ENCODE measurements at regions of chr2 and their contacts with region 1.

Region 1: GRCh38 chr2:171687287-171688128 is at the start of gene DYNC1I2:
- DNase-seq: peak; percentile 33 to 89 (median 69)
- ATAC-seq: peak; percentile 76
- H3K4me3 ChIP-seq: peak within 1 kb of the TSS; percentile 89 to 93
- H3K4me3 Mint-ChIP-seq: peak within 1 kb of the TSS; percentile 94
- H3K27ac ChIP-seq: peak within 1 kb of the TSS; percentile 45 to 52
- H3K27ac Mint-ChIP-seq: peak within 1 kb of the TSS; percentile 91
- H3K4me1 ChIP-seq: peaks cover 11% of the 10 kb centered on the region
- H3K4me1 Mint-ChIP-seq: peaks cover 25% of the 10 kb centered on the region
- H3K27me3 ChIP-seq: no peaks in the 10 kb centered on the region
- H3K27me3 Mint-ChIP-seq: no peaks in the 10 kb centered on the region
- CTCF ChIP-seq: no peak
- total RNA-seq, gene DYNC1I2: 6.9 to 9.1 TPM

Region 2: GRCh38 chr2:169798718-169799592 is 1888.6 kb before region 1 on chr2 and contains the start of gene SSB:
- CTCF ChIA-PET with region 1: no interaction called
- POLR2A ChIA-PET with region 1: no interaction called
- intact Hi-C with region 1: loop called in 1 of 2 experiments (anchors 5 kb)
- DNase-seq: peak; percentile 83 to 97 (median 93)
- ATAC-seq: peak; percentile 92
- H3K4me3 ChIP-seq: peak within 1 kb of the TSS; percentile 55 to 80
- H3K4me3 Mint-ChIP-seq: peak within 1 kb of the TSS; percentile 80
- H3K27ac ChIP-seq: peak within 1 kb of the TSS; percentile 86 to 89
- H3K27ac Mint-ChIP-seq: peak within 1 kb of the TSS; percentile 87
- H3K4me1 ChIP-seq: peaks cover 20% of the 10 kb centered on the region
- H3K4me1 Mint-ChIP-seq: peaks cover 29% of the 10 kb centered on the region
- H3K27me3 ChIP-seq: no peaks in the 10 kb centered on the region
- H3K27me3 Mint-ChIP-seq: no peaks in the 10 kb centered on the region
- CTCF ChIP-seq: no peak
- total RNA-seq, gene SSB: 150 to 170 TPM

Region 3: GRCh38 chr2:171741189-171741588 is 53.7 kb after region 1 on chr2:
- CTCF ChIA-PET with region 1: no interaction called
- POLR2A ChIA-PET with region 1: no interaction called
- intact Hi-C with region 1: no loop called
- DNase-seq: no peak
- ATAC-seq: no peak
- H3K4me3 ChIP-seq: no peak overlapping the region
- H3K4me3 Mint-ChIP-seq: no peak overlapping the region
- H3K27ac ChIP-seq: no peak overlapping the region
- H3K27ac Mint-ChIP-seq: no peak overlapping the region
- H3K4me1 ChIP-seq: no peaks in the 10 kb centered on the region
- H3K4me1 Mint-ChIP-seq: peaks cover 8% of the 10 kb centered on the region
- H3K27me3 ChIP-seq: no peaks in the 10 kb centered on the region
- H3K27me3 Mint-ChIP-seq: no peaks in the 10 kb centered on the region
- CTCF ChIP-seq: no peak

Region 4: DNA sequence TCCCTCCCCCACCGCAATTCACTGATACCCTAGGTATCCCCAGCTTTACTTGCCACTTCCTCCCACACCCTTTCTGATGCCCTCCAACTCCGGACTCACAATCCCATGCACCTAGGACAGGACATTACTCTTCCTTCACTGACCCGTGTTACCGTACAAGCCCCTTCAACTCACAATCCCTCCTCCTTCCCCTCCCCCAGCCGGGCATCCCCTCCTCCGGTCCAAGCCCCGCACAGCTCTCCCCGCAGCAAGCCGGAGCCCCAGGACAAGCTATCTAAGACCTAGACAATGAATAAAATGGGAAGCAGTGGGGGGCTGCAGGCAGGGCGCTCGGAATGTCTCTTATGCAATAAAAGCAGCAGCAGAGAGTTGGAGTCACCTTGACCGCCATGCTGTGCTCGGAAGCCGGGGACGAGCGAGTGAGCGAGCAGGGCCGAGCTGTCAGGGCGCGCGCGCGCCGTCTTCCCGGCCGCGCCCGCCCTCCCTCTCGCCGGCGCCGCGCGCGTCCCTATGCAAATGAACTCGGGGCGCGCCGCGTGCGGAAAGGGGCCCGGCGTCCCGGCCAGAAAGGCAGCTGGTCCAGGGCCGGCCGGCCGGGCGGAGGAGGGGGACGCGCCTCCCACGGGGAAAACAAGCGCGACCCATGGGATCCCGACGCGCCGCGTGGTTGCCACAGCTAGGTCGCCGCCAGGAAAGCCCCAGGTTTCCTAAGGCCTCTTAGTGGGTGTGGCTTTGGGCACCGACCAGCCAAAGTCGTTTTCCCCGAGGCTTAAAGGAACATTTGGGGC is 206.5 kb after region 1 on chr2 and contains the start of gene SLC25A12:
- CTCF ChIA-PET with region 1: no interaction called
- POLR2A ChIA-PET with region 1: no interaction called
- intact Hi-C with region 1: loop called in 1 of 2 experiments (anchors 1 kb)
- DNase-seq: peak; percentile 38 to 87 (median 72)
- ATAC-seq: peak; percentile 93
- H3K4me3 ChIP-seq: peak within 1 kb of the TSS; percentile 76 to 97
- H3K4me3 Mint-ChIP-seq: peak within 1 kb of the TSS; percentile 99
- H3K27ac ChIP-seq: peak within 1 kb of the TSS; percentile 51 to 71
- H3K27ac Mint-ChIP-seq: peak within 1 kb of the TSS; percentile 88
- H3K4me1 ChIP-seq: peaks cover 25% of the 10 kb centered on the region
- H3K4me1 Mint-ChIP-seq: peaks cover 47% of the 10 kb centered on the region
- H3K27me3 ChIP-seq: no peaks in the 10 kb centered on the region
- H3K27me3 Mint-ChIP-seq: no peaks in the 10 kb centered on the region
- CTCF ChIP-seq: no peak
- total RNA-seq, gene SLC25A12: 9.1 to 9.2 TPM

Region 5: DNA sequence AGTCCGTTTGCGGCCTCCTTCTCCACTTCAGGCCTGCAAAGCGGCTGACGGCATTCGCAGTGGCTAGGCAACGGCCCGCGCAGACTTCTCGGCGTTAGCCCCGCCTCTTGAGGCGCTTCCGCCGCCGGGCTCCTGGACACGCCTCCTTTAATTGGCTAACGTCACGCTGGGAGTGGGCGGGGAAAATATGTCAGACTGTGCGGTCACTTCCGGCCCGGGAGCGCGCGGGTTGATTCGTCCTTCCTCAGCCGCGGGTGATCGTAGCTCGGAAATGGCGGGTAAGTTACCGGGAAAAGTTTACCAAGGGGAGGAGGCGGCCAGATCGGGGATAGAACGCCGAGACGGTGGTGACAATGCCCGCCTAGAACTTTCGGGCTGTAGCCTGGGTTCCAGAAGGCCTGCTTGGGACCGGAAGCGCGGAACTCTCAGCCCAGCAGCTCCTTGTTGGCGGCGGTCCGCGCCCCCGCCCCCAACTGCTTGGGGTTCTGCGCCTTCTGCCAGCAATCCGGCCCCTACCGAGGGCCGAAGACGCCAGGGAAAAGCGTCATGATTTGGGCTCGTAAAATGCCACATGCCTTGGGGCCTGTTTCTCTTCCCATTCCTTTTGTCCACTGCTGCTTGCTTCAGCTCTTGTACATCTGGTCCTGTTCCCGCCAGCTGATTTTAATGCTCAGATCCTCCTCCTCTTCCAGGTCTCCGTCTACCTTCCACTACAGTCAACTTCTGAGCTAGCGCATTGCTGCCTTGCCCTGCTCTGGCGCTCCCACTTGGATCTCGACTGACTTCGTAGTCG is 234.9 kb after region 1 on chr2 and contains the start of gene HAT1:
- CTCF ChIA-PET with region 1: no interaction called
- POLR2A ChIA-PET with region 1: no interaction called
- intact Hi-C with region 1: loop called (anchors 1 to 5 kb)
- DNase-seq: peak; percentile 94 to 99 (median 97)
- ATAC-seq: peak; percentile 98
- H3K4me3 ChIP-seq: peak within 1 kb of the TSS; percentile 82 to 97
- H3K4me3 Mint-ChIP-seq: peak within 1 kb of the TSS; percentile 98
- H3K27ac ChIP-seq: peak within 1 kb of the TSS; percentile 94 to 96
- H3K27ac Mint-ChIP-seq: peak within 1 kb of the TSS; percentile 97
- H3K4me1 ChIP-seq: peaks cover 21% of the 10 kb centered on the region
- H3K4me1 Mint-ChIP-seq: peaks cover 45% of the 10 kb centered on the region
- H3K27me3 ChIP-seq: no peaks in the 10 kb centered on the region
- H3K27me3 Mint-ChIP-seq: no peaks in the 10 kb centered on the region
- CTCF ChIP-seq: no peak
- total RNA-seq, gene HAT1: 29.5 to 30.2 TPM

Region 6: GRCh38 chr2:171999604-172000469 is 312.3 kb after region 1 on chr2 and contains the start of gene METAP1D:
- CTCF ChIA-PET with region 1: no interaction called
- POLR2A ChIA-PET with region 1: no interaction called
- intact Hi-C with region 1: loop called in 1 of 2 experiments (anchors 1 kb)
- DNase-seq: peak; percentile 61 to 91 (median 81)
- ATAC-seq: peak; percentile 87
- H3K4me3 ChIP-seq: peak within 1 kb of the TSS; percentile 85 to 87
- H3K4me3 Mint-ChIP-seq: peak within 1 kb of the TSS; percentile 84
- H3K27ac ChIP-seq: peak within 1 kb of the TSS; percentile 57 to 69
- H3K27ac Mint-ChIP-seq: peak within 1 kb of the TSS; percentile 82
- H3K4me1 ChIP-seq: peaks cover 8% of the 10 kb centered on the region
- H3K4me1 Mint-ChIP-seq: peaks cover 23% of the 10 kb centered on the region
- H3K27me3 ChIP-seq: peaks cover 0 to 4% of the 10 kb centered on the region in 2 experiments
- H3K27me3 Mint-ChIP-seq: peaks cover 8% of the 10 kb centered on the region
- CTCF ChIP-seq: no peak
- total RNA-seq, gene METAP1D: 5.7 to 6.2 TPM

Measured in CD8-positive, alpha-beta T cell (primary cell).